Transverse colon (tissue), 4 donors: ENCODE measurements at regions of chr9 and their contacts with region 1.

Region 1: DNA sequence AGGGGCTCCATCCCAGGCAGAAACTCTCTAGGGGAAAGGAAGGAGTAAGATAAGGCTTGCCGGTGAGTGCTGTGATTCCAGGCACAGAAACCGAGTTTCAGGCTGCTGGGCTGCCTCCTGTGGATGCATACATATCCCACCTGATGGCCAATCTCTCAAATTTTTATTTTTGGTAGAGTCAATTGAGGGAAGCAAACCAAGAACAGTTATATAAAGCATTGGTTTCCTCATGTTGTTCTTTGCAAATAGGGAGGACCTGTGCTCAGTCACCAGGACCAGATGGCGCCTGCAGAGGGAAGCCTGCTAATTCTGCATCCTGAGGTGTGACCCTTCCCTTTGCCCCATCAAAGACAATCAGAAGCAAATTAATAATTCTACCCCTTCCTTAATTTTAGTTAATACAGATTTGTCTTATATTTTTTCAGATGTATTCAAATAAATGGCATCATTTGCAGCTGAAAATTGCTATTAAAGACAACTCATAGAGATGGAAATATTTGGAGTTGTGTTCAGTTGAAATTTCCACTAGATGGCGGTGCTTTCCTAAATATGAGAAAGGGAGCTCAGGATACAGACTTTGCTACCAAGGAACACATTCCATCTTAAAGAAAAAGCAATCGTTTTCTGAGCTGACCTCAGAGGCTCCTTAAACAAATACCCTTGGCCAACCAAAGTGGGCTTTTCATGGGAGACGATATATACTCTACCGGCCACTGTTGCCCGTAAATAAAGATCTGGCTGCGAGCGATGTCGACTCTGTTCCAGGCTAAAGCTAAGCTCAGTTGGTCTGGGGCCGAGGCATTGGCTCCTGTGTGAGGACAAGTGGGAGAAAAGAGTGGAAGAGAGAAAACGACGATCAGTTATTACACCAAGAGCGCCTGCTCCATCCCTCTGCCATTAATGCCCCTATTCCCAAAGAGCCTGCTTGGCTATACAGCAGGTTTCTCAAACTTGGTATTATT is 225.7 kb upstream of the KLF9 start:
- DNase-seq: no peak
- H3K4me3 ChIP-seq: no peak overlapping the region
- H3K27ac ChIP-seq: no peak overlapping the region
- H3K4me1 ChIP-seq: peaks cover 0 to 3% (median 0%) of the 10 kb centered on the region in 4 donors
- H3K27me3 ChIP-seq: no peaks in the 10 kb centered on the region
- CTCF ChIP-seq: peak; percentile 38 to 56 (median 53)
- EP300 ChIP-seq: no peak
- POLR2A ChIP-seq: no peak

Region 2: DNA sequence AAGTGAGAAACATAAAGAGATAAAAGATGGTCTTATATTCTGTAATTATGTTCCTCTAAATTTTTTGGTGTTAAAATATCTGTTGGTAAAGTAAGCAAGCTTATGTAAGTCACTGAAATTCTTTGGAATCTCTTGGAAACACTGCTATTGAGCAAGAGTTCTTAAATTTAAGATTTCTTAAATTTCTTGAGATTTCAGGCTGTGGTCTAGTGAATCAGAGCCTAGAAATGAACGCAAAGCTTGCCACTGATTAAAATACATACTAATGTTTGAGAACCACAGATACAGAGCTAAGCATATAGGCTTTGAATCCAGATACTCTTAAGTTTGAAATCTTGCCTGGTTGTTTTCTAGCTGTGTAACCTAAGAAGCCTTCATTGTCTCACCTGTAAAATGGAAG is 347.9 kb after region 1 on chr9:
- in situ Hi-C with region 1: loop called in 1 of 4 experiments (anchors 25 kb)
- intact Hi-C with region 1: no loop called
- DNase-seq: no peak
- H3K4me3 ChIP-seq: no peak overlapping the region
- H3K27ac ChIP-seq: no peak overlapping the region
- H3K4me1 ChIP-seq: no peaks in the 10 kb centered on the region
- H3K27me3 ChIP-seq: no peaks in the 10 kb centered on the region
- CTCF ChIP-seq: no peak
- EP300 ChIP-seq: no peak
- POLR2A ChIP-seq: no peak

Region 3: DNA sequence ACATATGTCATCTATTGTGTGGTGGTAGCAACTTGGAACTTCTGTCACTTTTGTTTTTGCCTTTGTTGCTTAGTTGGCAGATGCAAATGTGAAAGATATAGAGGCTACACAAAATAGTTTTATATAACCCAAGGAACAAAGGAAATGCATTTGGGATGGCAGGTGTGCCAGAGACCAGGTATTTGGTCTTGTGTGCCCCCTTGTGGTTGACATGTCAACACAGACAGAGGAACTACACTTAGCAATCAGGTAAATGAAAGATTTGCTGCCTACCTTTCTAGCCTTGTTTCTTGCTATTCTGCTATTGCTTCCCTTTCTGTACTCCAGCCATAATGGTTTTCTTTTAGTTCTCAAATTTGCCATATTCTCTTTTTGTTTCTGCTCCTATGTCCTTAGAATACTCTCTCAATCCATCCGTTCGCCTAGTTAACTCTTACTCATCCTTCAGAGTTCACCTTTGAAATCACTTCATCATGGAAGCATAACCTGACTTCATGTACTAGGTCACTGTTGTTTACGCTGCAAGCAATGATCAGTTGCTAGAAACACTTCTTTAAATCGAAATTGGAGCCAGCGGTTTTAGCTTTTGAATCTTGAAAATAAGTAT is 361.7 kb after region 1 on chr9:
- in situ Hi-C with region 1: loop called in 2 of 4 experiments (anchors 25 kb)
- intact Hi-C with region 1: no loop called
- DNase-seq: peak; percentile 28
- H3K4me3 ChIP-seq: no peak overlapping the region
- H3K27ac ChIP-seq: no peak overlapping the region
- H3K4me1 ChIP-seq: no peaks in the 10 kb centered on the region
- H3K27me3 ChIP-seq: no peaks in the 10 kb centered on the region
- CTCF ChIP-seq: peak; percentile 40 to 48 (median 45)
- EP300 ChIP-seq: no peak
- POLR2A ChIP-seq: no peak

Region 4: DNA sequence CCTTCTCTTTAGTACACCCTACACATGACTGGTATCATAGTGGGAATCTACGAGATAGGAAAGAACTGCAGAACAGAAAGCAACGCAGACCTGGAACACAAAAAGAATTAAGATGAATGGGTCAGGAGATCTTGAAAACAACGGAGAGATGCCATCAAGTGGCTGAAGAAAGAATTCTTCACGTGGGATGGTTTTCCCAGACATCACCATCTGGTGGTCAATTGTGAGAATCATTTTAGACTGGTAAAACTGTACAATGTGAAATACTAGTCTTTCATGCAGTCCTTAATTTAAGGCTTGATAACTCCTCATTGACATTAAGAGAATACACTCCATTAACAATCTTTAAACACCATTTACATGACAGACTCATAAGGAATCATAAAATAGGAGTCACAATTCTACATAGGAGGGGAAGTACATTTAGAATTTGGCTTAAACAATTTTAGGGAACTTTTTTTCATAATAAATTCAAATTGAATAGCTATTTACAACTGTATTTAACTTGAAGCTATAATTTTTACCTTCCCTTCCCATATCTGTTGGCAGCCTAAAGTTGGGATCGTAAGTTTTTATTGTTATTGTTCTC is 609.7 kb after region 1 on chr9:
- in situ Hi-C with region 1: loop called in 1 of 4 experiments (anchors 25 kb)
- intact Hi-C with region 1: loop called (anchors 10 kb)
- DNase-seq: no peak
- H3K4me3 ChIP-seq: no peak overlapping the region
- H3K27ac ChIP-seq: no peak overlapping the region
- H3K4me1 ChIP-seq: no peaks in the 10 kb centered on the region
- H3K27me3 ChIP-seq: no peaks in the 10 kb centered on the region
- CTCF ChIP-seq: peak; percentile 51 to 75 (median 63)
- EP300 ChIP-seq: no peak
- POLR2A ChIP-seq: no peak

Region 5: DNA sequence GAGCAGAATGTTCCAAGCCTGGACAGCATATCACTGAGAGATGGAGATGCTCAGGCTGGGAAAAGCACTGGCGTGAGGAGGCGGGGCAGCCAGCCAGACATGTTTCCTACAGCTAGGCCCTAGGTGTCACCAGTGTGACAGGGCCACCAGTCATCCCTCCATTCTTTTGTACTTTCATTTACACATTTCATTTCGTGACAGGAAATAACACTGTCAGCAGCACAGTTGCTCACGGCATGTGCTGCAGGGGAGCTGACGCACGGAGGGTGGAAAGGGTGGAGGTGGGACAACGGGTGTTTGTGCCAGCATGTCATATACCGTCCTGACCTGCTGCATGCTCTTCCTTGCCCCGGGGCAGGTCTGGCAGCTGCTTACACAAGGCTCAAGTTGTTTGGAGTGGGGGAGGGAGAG is 1143.0 kb after region 1 on chr9:
- in situ Hi-C with region 1: loop called in 1 of 4 experiments (anchors 25 kb)
- intact Hi-C with region 1: no loop called
- DNase-seq: peak; percentile 69
- H3K4me3 ChIP-seq: no peak overlapping the region
- H3K27ac ChIP-seq: peak overlapping the region; percentile 24 to 48 (median 44)
- H3K4me1 ChIP-seq: no peaks in the 10 kb centered on the region
- H3K27me3 ChIP-seq: no peaks in the 10 kb centered on the region
- CTCF ChIP-seq: no peak
- EP300 ChIP-seq: peak; percentile 71
- POLR2A ChIP-seq: peak; percentile 48